ENCODE measurements at regions of chr11 and their contacts with region 1.

Region 1: GRCh38 chr11:104705490-104706190 is 192.6 kb downstream of the CASP12 start:
- DNase-seq: peak; percentile 10 to 92 (median 87)
- ATAC-seq: peak; percentile 99
- H3K4me3 ChIP-seq: peak overlapping the region; percentile 54
- H3K4me3 Mint-ChIP-seq: peak overlapping the region; percentile 65 to 87 (median 72)
- H3K27ac ChIP-seq: peak overlapping the region; percentile 67
- H3K27ac Mint-ChIP-seq: peak overlapping the region; percentile 82 to 98 (median 96)
- H3K4me1 ChIP-seq: peaks cover 40 to 49% of the 10 kb centered on the region in 2 donors
- H3K4me1 Mint-ChIP-seq: peaks cover 33 to 75% (median 60%) of the 10 kb centered on the region in 7 donors
- H3K27me3 ChIP-seq: no peaks in the 10 kb centered on the region
- H3K27me3 Mint-ChIP-seq: no peaks in the 10 kb centered on the region

Region 2: GRCh38 chr11:103108933-103109817 is 1596.5 kb before region 1 on chr11 and contains the start of gene DYNC2H1:
- CTCF ChIA-PET with region 1: no interaction called
- POLR2A ChIA-PET with region 1: no interaction called
- intact Hi-C with region 1: loop called in 1 of 2 experiments (anchors 10 kb)
- DNase-seq: peak; percentile 78 to 91 (median 89)
- ATAC-seq: peak; percentile 99
- H3K4me3 ChIP-seq: peak within 1 kb of the TSS; percentile 93
- H3K4me3 Mint-ChIP-seq: peak within 1 kb of the TSS; percentile 87 to 99 (median 94)
- H3K27ac ChIP-seq: peak within 1 kb of the TSS; percentile 60
- H3K27ac Mint-ChIP-seq: peak within 1 kb of the TSS; percentile 87 to 99 (median 92)
- H3K4me1 ChIP-seq: peaks cover 4 to 6% of the 10 kb centered on the region in 2 donors
- H3K4me1 Mint-ChIP-seq: peaks cover 5 to 19% (median 13%) of the 10 kb centered on the region in 7 donors
- H3K27me3 ChIP-seq: no peaks in the 10 kb centered on the region
- H3K27me3 Mint-ChIP-seq: peaks cover 6 to 42% (median 7%) of the 10 kb centered on the region in 5 donors
- total RNA-seq, gene DYNC2H1: 1.5 to 4.2 (median 3.0) TPM

Region 3: DNA sequence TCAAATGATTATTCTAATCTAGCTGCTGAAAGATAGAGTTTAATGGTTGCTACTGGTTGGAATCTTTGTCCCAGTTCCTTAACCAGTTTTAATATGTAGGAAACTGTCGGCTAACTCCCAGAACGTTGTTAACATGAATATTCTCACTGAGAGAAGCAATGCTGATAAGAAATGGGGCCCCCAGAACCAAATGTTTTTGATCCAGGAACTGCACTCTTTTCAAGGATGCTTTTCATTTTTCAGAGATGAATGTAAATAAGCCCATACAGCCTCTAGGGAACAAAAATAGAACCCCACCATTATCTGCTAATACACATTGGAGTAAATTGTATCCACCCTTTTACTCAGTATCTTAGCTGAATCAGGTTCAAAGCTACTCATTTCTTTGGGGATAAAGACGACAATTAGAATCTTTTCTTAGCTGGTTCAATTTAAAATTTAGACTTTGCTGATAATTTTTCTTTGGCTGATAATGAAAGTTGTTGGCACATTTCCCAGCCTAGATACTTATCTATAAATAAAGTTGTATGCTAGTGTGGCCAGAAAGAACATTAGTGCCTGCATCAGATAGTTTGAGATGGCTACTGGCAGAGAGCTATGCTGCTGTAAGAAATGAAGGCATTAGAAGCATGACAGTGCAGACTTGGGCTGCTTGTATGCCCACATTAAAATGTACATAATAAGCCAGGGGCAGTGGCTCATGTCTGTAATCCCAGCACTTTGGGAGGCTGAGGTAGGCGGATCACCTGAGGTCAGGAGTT is 218.4 kb before region 1 on chr11:
- CTCF ChIA-PET with region 1: no interaction called
- POLR2A ChIA-PET with region 1: no interaction called
- intact Hi-C with region 1: no loop called
- DNase-seq: no peak
- ATAC-seq: no peak
- H3K4me3 ChIP-seq: no peak overlapping the region
- H3K4me3 Mint-ChIP-seq: no peak overlapping the region
- H3K27ac ChIP-seq: no peak overlapping the region
- H3K27ac Mint-ChIP-seq: no peak overlapping the region
- H3K4me1 ChIP-seq: no peaks in the 10 kb centered on the region
- H3K4me1 Mint-ChIP-seq: no peaks in the 10 kb centered on the region
- H3K27me3 ChIP-seq: no peaks in the 10 kb centered on the region
- H3K27me3 Mint-ChIP-seq: peaks cover 0 to 6% (median 0%) of the 10 kb centered on the region in 5 donors

Region 4: DNA sequence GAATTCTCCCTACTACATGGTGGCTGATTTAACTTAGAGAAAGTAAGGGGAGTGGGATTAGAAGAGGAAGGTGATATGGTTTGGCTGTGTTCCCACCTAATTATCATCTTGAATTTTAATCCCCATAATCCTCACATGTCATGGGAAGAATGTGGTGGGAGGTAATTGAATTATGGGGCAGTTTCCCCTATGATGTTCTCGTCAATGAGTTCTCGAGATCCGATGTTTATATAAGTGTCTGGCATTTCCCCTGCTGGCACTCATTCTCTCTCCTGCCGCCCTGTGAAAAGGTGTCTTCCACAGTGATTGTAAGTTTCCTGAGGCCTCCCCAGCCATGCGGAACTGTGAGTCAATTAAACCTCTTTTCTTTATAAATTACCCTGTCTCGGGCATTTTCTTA is 23.3 kb after region 1 on chr11:
- CTCF ChIA-PET with region 1: no interaction called
- POLR2A ChIA-PET with region 1: interaction called, 3 read pairs
- intact Hi-C with region 1: loop called (anchors 2 kb)
- DNase-seq: no peak
- ATAC-seq: no peak
- H3K4me3 ChIP-seq: no peak overlapping the region
- H3K4me3 Mint-ChIP-seq: no peak overlapping the region
- H3K27ac ChIP-seq: no peak overlapping the region
- H3K27ac Mint-ChIP-seq: no peak overlapping the region
- H3K4me1 ChIP-seq: no peaks in the 10 kb centered on the region
- H3K4me1 Mint-ChIP-seq: peaks cover 0 to 20% (median 13%) of the 10 kb centered on the region in 7 donors
- H3K27me3 ChIP-seq: no peaks in the 10 kb centered on the region
- H3K27me3 Mint-ChIP-seq: no peaks in the 10 kb centered on the region

Region 5: GRCh38 chr11:104799251-104799650 is 93.6 kb after region 1 on chr11:
- CTCF ChIA-PET with region 1: no interaction called
- POLR2A ChIA-PET with region 1: interaction called, 8 read pairs
- intact Hi-C with region 1: loop called (anchors 1 kb)
- DNase-seq: peak in 2 of 9 donors; percentile 4 to 9
- ATAC-seq: peak; percentile 31
- H3K4me3 ChIP-seq: peak overlapping the region; percentile 33
- H3K4me3 Mint-ChIP-seq: peak overlapping the region; percentile 63 to 90 (median 85)
- H3K27ac ChIP-seq: no peak overlapping the region
- H3K27ac Mint-ChIP-seq: peak overlapping the region; percentile 69 to 95 (median 85)
- H3K4me1 ChIP-seq: peaks cover 0 to 10% of the 10 kb centered on the region in 2 donors
- H3K4me1 Mint-ChIP-seq: peaks cover 10 to 53% (median 40%) of the 10 kb centered on the region in 7 donors
- H3K27me3 ChIP-seq: no peaks in the 10 kb centered on the region
- H3K27me3 Mint-ChIP-seq: no peaks in the 10 kb centered on the region

Region 6: DNA sequence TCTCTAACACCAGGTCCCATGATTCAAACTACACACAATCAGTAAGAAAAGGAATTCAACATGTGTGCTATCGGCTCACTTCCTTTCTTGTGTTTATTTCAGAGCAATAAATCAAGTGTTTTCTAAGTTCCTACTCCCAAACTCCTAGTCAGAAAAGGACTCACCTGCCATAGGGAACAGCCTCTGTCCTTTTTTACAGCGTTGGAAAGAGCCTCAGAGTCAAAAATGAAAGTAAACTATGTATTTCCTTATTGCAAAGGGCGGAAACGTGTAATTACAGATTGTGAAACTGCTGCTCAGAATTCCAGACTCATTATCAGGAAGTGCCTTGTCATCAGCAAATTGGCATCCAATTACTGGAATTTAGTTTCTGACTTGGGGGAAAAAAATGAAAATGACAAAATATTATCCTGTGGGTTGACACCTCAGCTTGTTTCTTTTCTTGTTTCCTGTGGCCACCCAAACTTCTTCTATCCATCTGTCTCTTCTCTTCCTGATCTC is 262.8 kb after region 1 on chr11 and contains the start of gene CASP4:
- CTCF ChIA-PET with region 1: no interaction called
- POLR2A ChIA-PET with region 1: no interaction called
- intact Hi-C with region 1: loop called (anchors 1 kb)
- DNase-seq: peak in 7 of 9 donors; percentile 18 to 57 (median 48)
- ATAC-seq: peak; percentile 82
- H3K4me3 ChIP-seq: peak within 1 kb of the TSS; percentile 67
- H3K4me3 Mint-ChIP-seq: peak within 1 kb of the TSS; percentile 90 to 99 (median 96)
- H3K27ac ChIP-seq: peak within 1 kb of the TSS; percentile 89
- H3K27ac Mint-ChIP-seq: peak within 1 kb of the TSS; percentile 94 to 100 (median 97)
- H3K4me1 ChIP-seq: peaks cover 16 to 36% of the 10 kb centered on the region in 2 donors
- H3K4me1 Mint-ChIP-seq: peaks cover 35 to 47% (median 43%) of the 10 kb centered on the region in 7 donors
- H3K27me3 ChIP-seq: no peaks in the 10 kb centered on the region
- H3K27me3 Mint-ChIP-seq: no peaks in the 10 kb centered on the region
- total RNA-seq, gene CASP4: 60.7 to 94.7 (median 76.9) TPM

Region 7: DNA sequence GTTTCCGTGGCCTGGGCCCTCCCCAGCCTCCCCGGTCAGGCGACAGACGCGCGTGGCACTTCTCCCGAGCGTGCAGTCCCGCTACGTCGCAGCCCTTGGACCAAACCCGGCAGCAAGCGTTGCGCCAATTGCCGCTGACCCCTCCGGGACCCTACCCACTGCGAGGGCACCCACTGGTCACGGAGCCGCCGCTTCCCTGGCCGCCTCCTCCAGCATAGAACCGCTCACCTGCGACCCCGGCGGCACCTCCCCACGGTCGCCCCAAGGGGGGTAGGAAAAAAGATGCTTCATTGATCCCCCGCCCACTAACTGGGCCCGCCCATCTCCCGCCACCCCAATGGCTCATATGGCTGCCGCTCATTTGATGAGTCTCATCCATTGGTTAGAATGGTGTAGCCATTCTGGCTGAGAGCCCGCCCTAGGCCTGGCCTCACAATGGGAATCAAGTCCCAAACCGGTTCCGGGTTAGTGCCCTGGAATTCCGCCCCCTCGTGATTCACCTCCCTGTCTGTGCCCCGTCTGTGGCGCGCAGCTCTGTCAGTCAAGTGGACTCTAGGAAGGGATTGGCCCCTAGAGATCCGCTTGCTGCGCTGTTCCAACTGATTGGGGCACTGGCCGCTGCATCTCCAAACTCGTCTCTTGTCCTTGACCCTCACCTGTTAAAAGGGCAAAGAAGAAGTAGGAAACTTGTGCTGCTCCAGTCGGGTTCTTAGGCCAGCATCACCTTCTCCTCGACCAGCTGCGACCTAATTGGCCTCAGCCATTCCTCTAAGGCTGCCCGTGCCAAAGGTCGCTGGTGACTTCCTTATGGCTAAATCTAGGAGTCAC is 1316.5 kb after region 1 on chr11 and contains the start of gene MSANTD4:
- CTCF ChIA-PET with region 1: no interaction called
- POLR2A ChIA-PET with region 1: no interaction called
- intact Hi-C with region 1: loop called in 1 of 2 experiments (anchors 1 kb)
- DNase-seq: peak; percentile 89 to 97 (median 95)
- ATAC-seq: peak; percentile 98
- H3K4me3 ChIP-seq: peak within 1 kb of the TSS; percentile 82
- H3K4me3 Mint-ChIP-seq: peak within 1 kb of the TSS; percentile 91 to 99 (median 94)
- H3K27ac ChIP-seq: peak within 1 kb of the TSS; percentile 66
- H3K27ac Mint-ChIP-seq: peak within 1 kb of the TSS; percentile 82 to 96 (median 89)
- H3K4me1 ChIP-seq: peaks cover 10 to 20% of the 10 kb centered on the region in 2 donors
- H3K4me1 Mint-ChIP-seq: peaks cover 34 to 60% (median 49%) of the 10 kb centered on the region in 7 donors
- H3K27me3 ChIP-seq: no peaks in the 10 kb centered on the region
- H3K27me3 Mint-ChIP-seq: peaks cover 0 to 13% (median 6%) of the 10 kb centered on the region in 5 donors
- total RNA-seq, gene MSANTD4: 4.7 to 18.7 (median 15.3) TPM